Activated T-helper 2 cell treated with anti-CD3 and anti-CD28 coated beads, Interferon-gamma antibody, Interleukin-2, Interleukin-4, amounts not matched to agents 10 μg/mL and 5 μg/mL and 100 μg/mL, durations not matched to agents 14 hours and 24 hours and 36 hours (primary cell): ENCODE measurements at regions of chr5 and their contacts with region 1.

Region 1: GRCh38 chr5:44875661-44876605 is 67.2 kb downstream of the MRPS30 start:
- DNase-seq: peak; percentile 12
- H3K4me3 Mint-ChIP-seq: no peak overlapping the region
- H3K27ac Mint-ChIP-seq: peak overlapping the region; percentile 85
- H3K4me1 Mint-ChIP-seq: peaks cover 18% of the 10 kb centered on the region
- H3K27me3 Mint-ChIP-seq: no peaks in the 10 kb centered on the region

Region 2: DNA sequence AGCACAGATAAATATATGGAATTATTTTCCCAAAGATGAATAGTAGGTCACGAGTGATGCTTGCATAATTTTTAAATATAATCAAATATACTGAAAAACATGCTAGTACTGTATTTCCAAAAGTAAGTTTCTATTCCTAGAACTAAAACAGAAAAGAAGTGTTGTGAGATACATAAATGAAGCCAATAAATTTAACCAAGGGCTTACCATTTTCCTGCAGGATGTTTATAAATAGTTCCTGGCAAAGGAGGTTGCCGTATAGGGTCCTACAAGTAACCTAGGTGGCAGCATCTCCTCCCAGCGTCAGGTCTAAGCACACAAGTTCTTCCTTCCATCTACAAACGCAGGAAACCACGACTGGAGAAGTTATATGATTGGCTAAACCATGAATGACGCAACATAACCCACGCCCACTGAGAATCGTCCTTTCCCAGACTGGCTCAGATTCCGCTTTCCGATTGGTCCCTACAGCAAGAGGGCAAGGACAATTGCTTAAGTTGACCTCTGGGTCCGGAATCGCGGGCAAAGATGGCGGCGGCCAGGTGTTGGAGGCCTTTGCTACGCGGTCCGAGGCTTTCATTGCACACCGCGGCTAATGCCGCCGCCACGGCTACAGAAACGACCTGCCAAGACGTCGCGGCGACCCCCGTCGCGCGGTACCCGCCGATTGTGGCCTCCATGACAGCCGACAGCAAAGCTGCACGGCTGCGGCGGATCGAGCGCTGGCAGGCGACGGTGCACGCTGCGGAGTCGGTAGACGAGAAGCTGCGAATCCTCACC is 67.3 kb before region 1 on chr5 and contains the start of gene MRPS30:
- intact Hi-C with region 1: loop called (anchors 1 kb)
- DNase-seq: peak; percentile 91
- H3K4me3 Mint-ChIP-seq: peak within 1 kb of the TSS; percentile 94
- H3K27ac Mint-ChIP-seq: peak within 1 kb of the TSS; percentile 94
- H3K4me1 Mint-ChIP-seq: peaks cover 47% of the 10 kb centered on the region
- H3K27me3 Mint-ChIP-seq: no peaks in the 10 kb centered on the region
- total RNA-seq, gene MRPS30: 57.4 and 59.9 TPM in 2 replicates

Region 3: GRCh38 chr5:44927115-44927734 is 51.3 kb after region 1 on chr5:
- intact Hi-C with region 1: loop called (anchors 5 kb)
- DNase-seq: no peak
- H3K4me3 Mint-ChIP-seq: no peak overlapping the region
- H3K27ac Mint-ChIP-seq: no peak overlapping the region
- H3K4me1 Mint-ChIP-seq: no peaks in the 10 kb centered on the region
- H3K27me3 Mint-ChIP-seq: no peaks in the 10 kb centered on the region